AG04450 (cell line): ENCODE measurements at regions of chr14 and their contacts with region 1.

Region 1: DNA sequence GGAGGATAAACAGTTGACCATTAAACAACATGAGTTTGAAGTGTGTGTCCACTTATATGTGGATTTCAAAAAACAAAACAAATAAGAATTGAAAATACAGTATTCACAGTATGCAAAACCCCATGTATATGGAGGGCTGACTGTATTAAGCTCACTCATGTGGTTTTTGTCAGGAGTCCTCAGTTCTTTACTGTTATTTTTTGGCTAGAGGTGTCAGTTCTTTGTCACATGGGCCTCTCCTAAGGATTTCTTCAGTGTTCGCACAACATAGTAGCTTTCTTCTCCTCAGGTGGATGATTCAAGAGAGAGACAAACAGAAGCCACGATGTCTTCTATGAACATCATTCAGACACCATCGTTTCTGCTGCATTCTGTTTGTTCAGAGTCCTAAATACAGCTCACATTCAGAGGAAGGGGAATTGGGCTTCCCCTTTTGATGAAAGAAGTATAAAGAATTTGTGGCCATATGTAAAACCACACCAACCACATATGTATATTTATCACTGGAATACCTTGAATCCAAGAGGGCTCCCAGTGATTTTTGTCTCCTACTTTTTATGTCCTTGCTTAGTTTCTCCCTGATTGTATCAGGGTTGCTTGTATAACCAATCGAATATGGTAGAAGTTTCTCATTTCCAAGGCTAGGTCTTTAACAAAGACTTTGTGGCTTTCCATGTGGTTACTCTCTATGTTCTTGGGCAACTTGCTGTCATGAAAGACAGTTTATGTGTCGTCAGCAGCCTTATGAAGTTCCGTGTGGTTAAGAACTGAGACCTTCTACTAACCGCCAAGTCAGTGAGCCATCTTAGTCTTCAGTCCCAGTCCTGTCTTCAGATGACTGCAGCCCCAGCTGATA is 18.9 kb downstream of the MNAT1 start:
- DNase-seq: no peak
- H3K4me3 ChIP-seq: no peak overlapping the region
- H3K27ac ChIP-seq: no peak overlapping the region
- H3K27me3 ChIP-seq: no peaks in the 10 kb centered on the region
- CTCF ChIP-seq: no peak

Region 2: GRCh38 chr14:59638885-59639284 is 1114.6 kb before region 1 on chr14:
- CTCF ChIA-PET with region 1: no interaction called
- POLR2A ChIA-PET with region 1: no interaction called
- DNase-seq: no peak
- H3K4me3 ChIP-seq: no peak overlapping the region
- H3K27ac ChIP-seq: no peak overlapping the region
- H3K27me3 ChIP-seq: peaks cover under 1% of the 10 kb centered on the region
- CTCF ChIP-seq: no peak

Region 3: GRCh38 chr14:60248697-60249318 is 504.7 kb before region 1 on chr14 and contains the start of gene PPM1A:
- CTCF ChIA-PET with region 1: interaction called, 10 read pairs
- POLR2A ChIA-PET with region 1: no interaction called
- DNase-seq: peak; percentile 88
- H3K4me3 ChIP-seq: peak within 1 kb of the TSS; percentile 74
- H3K27ac ChIP-seq: peak within 1 kb of the TSS; percentile 98
- H3K27me3 ChIP-seq: no peaks in the 10 kb centered on the region
- CTCF ChIP-seq: no peak
- polyA plus RNA-seq, gene PPM1A: 32.8 and 44.1 TPM in 2 replicates

Region 4: GRCh38 chr14:61051051-61051450 is 297.6 kb after region 1 on chr14:
- CTCF ChIA-PET with region 1: no interaction called
- POLR2A ChIA-PET with region 1: no interaction called
- DNase-seq: no peak
- H3K4me3 ChIP-seq: no peak overlapping the region
- H3K27ac ChIP-seq: no peak overlapping the region
- H3K27me3 ChIP-seq: no peaks in the 10 kb centered on the region
- CTCF ChIP-seq: no peak

Region 5: DNA sequence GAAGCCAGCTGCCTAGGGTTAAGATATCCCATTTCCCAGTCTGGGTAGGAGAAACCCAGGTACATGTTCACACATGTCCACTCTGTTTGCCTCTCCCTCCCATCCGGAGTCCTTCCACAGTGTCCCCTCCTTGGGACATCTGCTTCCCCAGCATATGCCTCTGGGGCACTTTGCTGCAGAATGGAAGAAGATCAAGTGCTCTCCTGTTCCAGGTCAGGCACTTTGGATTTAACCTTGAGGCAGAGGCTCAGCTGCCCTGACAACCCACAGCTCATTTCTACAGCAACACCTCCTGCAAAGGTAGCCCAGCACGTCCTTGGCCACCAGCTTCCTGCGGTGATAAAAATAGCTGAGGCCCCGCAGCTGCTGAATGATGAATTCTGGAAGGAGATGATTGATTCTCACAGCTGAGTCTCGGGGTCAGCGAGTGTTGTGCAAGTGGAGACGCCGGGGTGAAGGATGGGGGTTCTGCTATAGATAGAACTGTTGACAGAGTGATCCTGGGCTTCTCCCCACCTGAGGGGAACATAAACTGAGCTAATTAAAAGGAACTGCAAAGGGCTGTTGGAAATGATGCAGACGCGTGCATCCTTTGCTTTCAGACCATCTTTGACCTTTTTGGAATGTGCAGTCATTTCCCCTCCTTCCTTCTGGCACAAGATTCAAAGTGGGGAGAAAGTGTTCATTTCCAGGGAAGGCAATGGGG is 372.5 kb after region 1 on chr14:
- CTCF ChIA-PET with region 1: no interaction called
- POLR2A ChIA-PET with region 1: interaction called, 10 read pairs
- DNase-seq: no peak
- H3K4me3 ChIP-seq: no peak overlapping the region
- H3K27ac ChIP-seq: peak overlapping the region; percentile 83
- H3K27me3 ChIP-seq: no peaks in the 10 kb centered on the region
- CTCF ChIP-seq: no peak